ENCODE measurements at regions of chr19 and their contacts with region 1.

Region 1: GRCh38 chr19:12139885-12140547 is at the start of gene ZNF20:
- DNase-seq: peak; percentile 97 to 99 (median 98)
- ATAC-seq: peak; percentile 98
- H3K4me3 ChIP-seq: peak within 1 kb of the TSS; percentile 91
- H3K4me1 ChIP-seq: peaks cover 17% of the 10 kb centered on the region
- CTCF ChIP-seq: no peak
- total RNA-seq, gene ZNF20: 4.4 to 7.0 (median 6.0) TPM

Region 2: DNA sequence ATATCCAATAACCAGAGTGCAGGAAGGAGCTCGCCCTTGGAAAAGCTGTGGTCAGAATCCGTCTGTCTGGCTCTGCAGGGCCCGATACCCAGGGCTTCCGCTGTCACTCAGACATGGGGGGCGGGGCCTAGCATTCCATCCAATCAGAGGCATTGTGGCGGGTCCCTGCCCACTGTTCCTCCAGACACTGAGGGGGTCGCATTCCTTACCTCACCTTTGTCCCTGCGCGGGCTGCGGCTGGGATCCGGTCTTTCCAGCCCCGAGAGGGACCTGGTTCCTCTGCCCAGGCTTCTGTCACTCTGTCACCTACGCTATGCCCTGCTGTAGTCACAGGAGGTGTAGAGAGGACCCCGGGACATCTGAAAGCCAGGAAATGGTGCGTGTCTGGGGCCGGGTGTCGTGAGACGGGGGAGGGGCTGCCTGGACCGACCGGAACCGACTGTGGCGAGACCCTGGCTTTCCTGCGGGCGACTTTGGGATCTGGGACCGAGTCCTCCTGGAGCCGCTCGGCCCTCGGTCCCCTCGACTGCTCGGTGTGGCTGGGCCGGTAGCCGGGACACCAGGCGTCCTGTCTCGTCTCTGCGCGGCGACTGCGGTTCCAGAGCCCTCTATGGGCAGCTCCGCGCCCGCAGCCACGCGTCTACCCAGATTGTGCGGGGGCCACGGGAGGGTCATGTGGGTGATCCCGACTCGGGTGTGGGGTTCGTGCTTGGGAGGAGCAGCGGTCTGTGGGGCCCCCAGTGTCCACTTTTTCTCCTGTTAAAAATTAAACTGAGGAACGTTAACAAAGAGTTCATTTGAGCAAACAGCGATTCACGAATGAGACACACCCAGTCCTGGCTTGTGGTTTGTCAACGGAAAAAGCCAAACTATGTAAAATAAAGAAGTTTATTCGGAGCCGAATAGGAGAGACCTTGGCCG is 252.1 kb before region 1 on chr19 and contains the start of gene ZNF69:
- intact Hi-C with region 1: loop called in 1 of 2 experiments (anchors 10 kb)
- DNase-seq: peak; percentile 93 to 98 (median 94)
- ATAC-seq: peak; percentile 95
- H3K4me3 ChIP-seq: peak within 1 kb of the TSS; percentile 43
- H3K4me1 ChIP-seq: peaks cover 6% of the 10 kb centered on the region
- CTCF ChIP-seq: no peak
- total RNA-seq, gene ZNF69: 15.7 to 30.5 (median 23.4) TPM

Region 3: GRCh38 chr19:12052497-12053169 is 87.4 kb before region 1 on chr19 and contains the start of gene ZNF878:
- intact Hi-C with region 1: loop called (anchors 10 kb)
- DNase-seq: peak; percentile 88 to 95 (median 92)
- ATAC-seq: peak; percentile 99
- H3K4me3 ChIP-seq: peak within 1 kb of the TSS; percentile 32
- H3K4me1 ChIP-seq: peaks cover 8% of the 10 kb centered on the region
- CTCF ChIP-seq: no peak
- total RNA-seq, gene ZNF878: 0.19 to 0.26 (median 0.22) TPM

Region 4: DNA sequence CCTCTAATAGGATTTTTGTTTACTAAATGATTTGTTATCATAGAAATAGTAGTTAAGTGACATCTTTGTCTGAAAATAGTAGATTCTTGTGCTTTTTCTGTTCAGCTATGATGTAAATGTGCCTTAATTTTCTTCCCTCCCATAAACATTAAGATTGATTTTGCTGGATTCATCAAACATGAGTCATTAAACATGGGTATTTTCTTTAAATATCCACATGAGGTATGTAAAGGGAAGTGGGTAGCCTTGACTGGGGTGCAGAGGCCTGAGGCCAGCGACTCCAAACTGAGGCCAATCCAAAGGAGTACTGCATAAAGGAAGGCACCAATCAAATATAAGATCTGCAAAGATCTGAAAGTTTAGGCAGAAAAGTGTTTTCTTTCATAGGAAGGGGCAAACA is 26.6 kb after region 1 on chr19:
- intact Hi-C with region 1: no loop called
- DNase-seq: no peak
- ATAC-seq: no peak
- H3K4me3 ChIP-seq: no peak overlapping the region
- H3K4me1 ChIP-seq: peaks cover 8% of the 10 kb centered on the region
- CTCF ChIP-seq: no peak